K562 (cell line): ENCODE measurements at regions of chr19 and their contacts with region 1.

Region 1: DNA sequence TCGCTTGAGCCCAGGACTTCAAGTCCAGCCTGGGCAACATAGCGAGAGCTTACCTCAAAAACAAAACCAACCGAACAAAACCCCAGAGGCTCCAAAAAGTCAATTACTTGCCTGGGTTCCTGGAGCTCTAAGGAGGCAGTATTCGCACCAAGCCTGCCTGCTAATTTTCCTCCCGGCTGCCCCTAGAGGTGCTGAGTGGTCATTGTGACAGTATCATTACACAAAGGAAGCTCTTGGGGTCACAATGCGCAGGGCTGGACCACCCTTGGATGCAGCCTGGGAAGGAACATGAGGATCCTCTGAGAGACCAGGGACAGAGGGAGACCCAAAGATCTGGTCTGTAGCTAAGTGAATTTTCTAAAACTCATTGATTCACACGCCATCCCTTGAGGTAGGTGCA is 8.5 kb upstream of the PEX11G start:
- DNase-seq: peak; percentile 39 to 58 (median 46)
- ATAC-seq: peak; percentile 77
- H3K4me3 ChIP-seq: no peak overlapping the region
- H3K27ac ChIP-seq: no peak overlapping the region
- H3K4me1 ChIP-seq: peaks cover 10 to 19% of the 10 kb centered on the region in 2 experiments
- H3K27me3 ChIP-seq: no peaks in the 10 kb centered on the region
- CTCF ChIP-seq: peak; percentile 51 to 79 (median 52)
- EP300 ChIP-seq: no peak
- POLR2A ChIP-seq: no peak
- RAD21 ChIP-seq: no peak; a peak in 1 of 4 replicates

Region 2: DNA sequence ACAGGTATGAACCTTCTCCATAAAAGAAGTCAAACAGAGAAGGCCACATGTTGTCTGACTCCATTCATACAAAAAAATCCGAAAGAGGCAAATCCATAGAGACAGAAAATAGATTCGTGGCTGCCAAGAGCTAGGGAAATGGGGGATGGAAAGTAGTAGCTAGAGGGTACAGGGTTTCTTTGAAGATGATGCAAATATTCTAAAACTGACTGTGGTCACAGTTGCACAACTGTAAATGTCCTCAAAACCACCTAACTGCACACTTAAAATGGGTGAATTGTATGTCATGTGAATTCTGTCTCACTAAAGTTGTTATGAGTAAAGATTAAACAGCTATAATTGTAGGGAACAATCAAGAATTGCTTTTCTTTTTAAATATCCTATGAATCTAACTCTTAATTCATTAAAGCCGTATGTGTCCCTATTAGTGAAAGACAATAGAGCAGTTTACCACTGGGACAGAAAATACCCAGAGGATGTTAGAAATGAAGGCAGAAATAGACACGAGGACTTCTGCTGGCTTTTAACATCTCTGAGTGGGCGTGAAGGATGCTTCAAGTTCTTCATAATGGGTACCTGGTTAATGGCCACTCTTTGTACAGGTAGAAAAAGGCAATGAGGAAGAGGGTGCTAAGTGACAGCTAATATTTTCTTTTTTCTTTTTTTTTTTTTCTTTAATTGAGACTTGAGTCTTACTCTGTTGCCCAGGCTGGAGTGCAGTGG is 224.3 kb before region 1 on chr19:
- CTCF ChIA-PET with region 1: no interaction called
- POLR2A ChIA-PET with region 1: no interaction called
- in situ Hi-C with region 1: no loop called
- intact Hi-C with region 1: no loop called
- DNase-seq: no peak
- ATAC-seq: no peak
- H3K4me3 ChIP-seq: no peak overlapping the region
- H3K27ac ChIP-seq: no peak overlapping the region
- H3K4me1 ChIP-seq: no peaks in the 10 kb centered on the region; a peak in 1 of 5 replicates
- H3K27me3 ChIP-seq: peaks cover 9 to 24% of the 10 kb centered on the region in 2 experiments
- CTCF ChIP-seq: no peak
- EP300 ChIP-seq: no peak
- POLR2A ChIP-seq: no peak
- RAD21 ChIP-seq: no peak

Region 3: DNA sequence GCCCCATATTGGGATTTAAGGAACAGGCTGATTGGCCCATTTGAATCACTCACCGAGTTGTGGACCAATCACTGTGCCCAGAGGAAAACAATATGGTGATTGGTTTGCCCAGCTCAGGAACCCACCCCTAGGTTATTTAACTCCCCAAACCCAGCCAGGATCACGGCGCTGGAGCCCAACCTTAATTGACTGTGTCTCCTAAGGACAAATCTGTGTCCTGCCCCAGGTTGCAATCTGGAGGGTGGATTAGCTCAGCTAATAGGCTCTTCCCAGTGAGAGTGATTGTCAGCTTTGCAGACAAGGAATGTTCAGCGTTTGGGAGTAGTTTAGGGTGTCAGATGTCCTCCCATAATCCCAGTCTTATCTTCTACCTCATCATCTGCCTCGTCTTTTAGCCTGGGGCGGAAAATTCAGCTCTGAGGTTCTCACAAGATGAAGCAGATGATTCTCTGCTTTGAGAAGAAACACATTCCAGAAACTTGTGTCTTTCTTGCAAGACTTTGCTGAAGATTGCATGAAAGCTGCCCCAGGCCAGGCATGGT is 15.2 kb after region 1 on chr19:
- CTCF ChIA-PET with region 1: no interaction called
- POLR2A ChIA-PET with region 1: interaction called, 10 read pairs
- in situ Hi-C with region 1: no loop called
- intact Hi-C with region 1: no loop called
- DNase-seq: peak; percentile 53 to 72 (median 71)
- ATAC-seq: peak; percentile 42
- H3K4me3 ChIP-seq: no peak overlapping the region
- H3K27ac ChIP-seq: no peak overlapping the region
- H3K4me1 ChIP-seq: peaks cover 16 to 26% of the 10 kb centered on the region in 2 experiments
- H3K27me3 ChIP-seq: no peaks in the 10 kb centered on the region
- CTCF ChIP-seq: no peak
- EP300 ChIP-seq: no peak
- POLR2A ChIP-seq: no peak
- RAD21 ChIP-seq: no peak